IMR-90 (cell line): ENCODE measurements at regions of chr1 and their contacts with region 1.

Region 1: DNA sequence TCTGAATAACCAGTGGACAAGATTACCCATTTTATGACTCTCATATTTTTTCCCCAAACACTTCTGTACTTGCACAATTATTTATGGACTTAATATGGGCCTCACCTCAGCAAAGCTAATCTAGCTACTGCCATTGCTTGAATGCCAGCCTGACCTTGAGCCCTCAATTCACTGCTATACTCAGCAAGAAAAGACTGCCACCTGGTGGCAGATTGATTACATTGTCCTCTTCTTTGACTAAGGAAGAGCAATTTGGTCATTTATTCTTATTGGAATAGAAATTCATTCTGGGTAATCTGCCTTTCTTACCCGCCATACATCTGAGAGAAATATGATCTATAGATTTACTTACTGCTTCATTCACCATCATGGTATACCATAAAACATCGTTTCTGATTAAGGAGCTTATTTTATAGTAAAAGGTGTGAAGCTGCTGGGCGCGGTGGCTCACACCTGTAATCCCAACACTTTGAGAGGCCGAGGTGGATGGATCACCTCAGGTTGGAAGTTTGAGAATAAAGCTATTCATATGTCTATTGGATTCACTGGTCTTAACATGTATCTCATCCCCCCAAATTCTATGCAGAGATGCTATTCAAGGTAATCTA is 32.9 kb upstream of the DIPK1A start:
- DNase-seq: peak; percentile 82
- ATAC-seq: peak; percentile 91
- H3K4me3 ChIP-seq: no peak overlapping the region
- H3K27ac ChIP-seq: no peak overlapping the region
- H3K4me1 ChIP-seq: no peaks in the 10 kb centered on the region
- H3K27me3 ChIP-seq: peaks cover 14% of the 10 kb centered on the region
- CTCF ChIP-seq: peak; percentile 92
- POLR2A ChIP-seq: no peak
- RAD21 ChIP-seq: peak; percentile 91

Region 2: GRCh38 chr1:92851729-92852128 is 142.5 kb before region 1 on chr1:
- CTCF ChIA-PET with region 1: interaction called, 7 read pairs
- POLR2A ChIA-PET with region 1: no interaction called
- dilution Hi-C with region 1: no loop called
- in situ Hi-C with region 1: loop called (anchors 5 kb)
- intact Hi-C with region 1: no loop called
- DNase-seq: no peak
- ATAC-seq: peak; percentile 14; the same call in 1 of the 2 replicates
- H3K4me3 ChIP-seq: no peak overlapping the region
- H3K27ac ChIP-seq: no peak overlapping the region
- H3K4me1 ChIP-seq: no peaks in the 10 kb centered on the region
- H3K27me3 ChIP-seq: no peaks in the 10 kb centered on the region
- CTCF ChIP-seq: no peak
- POLR2A ChIP-seq: no peak
- RAD21 ChIP-seq: no peak

Region 3: DNA sequence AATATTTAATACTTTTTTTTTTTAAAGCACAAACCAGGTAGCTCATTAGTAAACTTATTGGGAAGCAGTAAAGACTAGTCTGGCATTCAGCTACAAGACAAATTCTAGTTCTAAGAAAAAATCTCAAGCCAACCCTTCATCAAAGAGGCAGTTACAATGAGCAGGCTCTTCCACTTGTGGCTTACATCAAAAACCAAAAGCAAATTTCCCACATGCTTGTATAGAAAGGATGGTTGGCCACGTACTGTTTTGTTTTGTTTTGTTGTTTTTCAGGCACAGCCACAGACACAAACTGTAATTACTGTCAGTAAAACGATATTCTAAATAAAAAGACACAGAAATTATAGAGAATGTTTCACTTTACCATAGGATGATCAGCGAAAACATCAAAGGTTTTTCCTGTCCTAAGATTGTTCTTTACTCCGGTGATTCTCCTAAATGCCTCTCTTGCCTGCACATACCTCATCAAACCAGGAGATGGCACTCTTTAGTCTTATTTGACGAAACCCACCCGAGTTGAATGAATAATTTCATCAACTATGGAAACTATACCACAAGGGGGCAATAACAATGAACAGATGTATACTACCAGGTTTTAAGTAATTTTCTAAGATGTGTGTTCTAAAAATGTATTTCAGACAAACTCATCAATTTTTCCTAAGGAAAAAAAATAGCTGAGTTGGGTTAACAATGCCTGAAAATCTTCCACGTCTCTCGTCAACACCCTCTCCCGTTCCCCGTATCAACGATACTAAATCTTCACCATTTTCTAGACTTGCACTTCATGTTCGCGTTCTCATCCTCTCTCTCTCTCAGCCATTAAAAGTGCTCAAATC is 135.4 kb before region 1 on chr1:
- CTCF ChIA-PET with region 1: interaction called, 29 read pairs
- POLR2A ChIA-PET with region 1: no interaction called
- dilution Hi-C with region 1: no loop called
- in situ Hi-C with region 1: loop called (anchors 5 kb)
- intact Hi-C with region 1: loop called (anchors 1 kb)
- DNase-seq: peak; percentile 85
- ATAC-seq: peak; percentile 94
- H3K4me3 ChIP-seq: no peak overlapping the region
- H3K27ac ChIP-seq: no peak overlapping the region
- H3K4me1 ChIP-seq: no peaks in the 10 kb centered on the region
- H3K27me3 ChIP-seq: no peaks in the 10 kb centered on the region
- CTCF ChIP-seq: peak; percentile 100
- POLR2A ChIP-seq: no peak
- RAD21 ChIP-seq: peak; percentile 97

Region 4: GRCh38 chr1:92960395-92961130 is 33.6 kb before region 1 on chr1:
- CTCF ChIA-PET with region 1: interaction called, 16 read pairs
- POLR2A ChIA-PET with region 1: interaction called, 10 read pairs
- dilution Hi-C with region 1: no loop called
- in situ Hi-C with region 1: no loop called
- intact Hi-C with region 1: loop called (anchors 1 kb)
- DNase-seq: peak; percentile 82
- ATAC-seq: peak; percentile 53
- H3K4me3 ChIP-seq: peak overlapping the region; percentile 97
- H3K27ac ChIP-seq: peak overlapping the region; percentile 56
- H3K4me1 ChIP-seq: no peaks in the 10 kb centered on the region; the same call in 1 of the 2 replicates
- H3K27me3 ChIP-seq: no peaks in the 10 kb centered on the region; the same call in 1 of the 2 replicates
- CTCF ChIP-seq: peak; percentile 75
- POLR2A ChIP-seq: no peak
- RAD21 ChIP-seq: peak; percentile 76

Region 5: GRCh38 chr1:92968138-92969032 is 25.8 kb before region 1 on chr1:
- CTCF ChIA-PET with region 1: interaction called, 10 read pairs
- POLR2A ChIA-PET with region 1: no interaction called
- dilution Hi-C with region 1: no loop called
- in situ Hi-C with region 1: no loop called
- intact Hi-C with region 1: no loop called
- DNase-seq: no peak
- ATAC-seq: peak; percentile 65
- H3K4me3 ChIP-seq: no peak overlapping the region
- H3K27ac ChIP-seq: no peak overlapping the region
- H3K4me1 ChIP-seq: peaks cover 1% of the 10 kb centered on the region; the same call in 1 of the 2 replicates
- H3K27me3 ChIP-seq: peaks cover 19% of the 10 kb centered on the region
- CTCF ChIP-seq: peak; percentile 46
- POLR2A ChIP-seq: no peak
- RAD21 ChIP-seq: peak; percentile 33; the same call in 1 of the 2 replicates